WTC11 (cell line): ENCODE measurements at regions of chr17 and their contacts with region 1.

Region 1: GRCh38 chr17:8156246-8156992 is 4.2 kb upstream of the PER1 start:
- DNase-seq: peak; percentile 100
- ATAC-seq: peak; percentile 67
- H3K4me3 Mint-ChIP-seq: no peak overlapping the region
- H3K27ac Mint-ChIP-seq: no peak overlapping the region
- H3K4me1 Mint-ChIP-seq: peaks cover 32% of the 10 kb centered on the region
- H3K27me3 Mint-ChIP-seq: peaks cover 3% of the 10 kb centered on the region; the same call in 1 of the 2 replicates
- CTCF ChIP-seq: no peak

Region 2: GRCh38 chr17:7997186-7997585 is 159.2 kb before region 1 on chr17:
- CTCF ChIA-PET with region 1: no interaction called
- POLR2A ChIA-PET with region 1: no interaction called
- DNase-seq: peak; percentile 69
- ATAC-seq: peak; percentile 92
- H3K4me3 Mint-ChIP-seq: no peak overlapping the region
- H3K27ac Mint-ChIP-seq: peak overlapping the region; percentile 27; the same call in 1 of the 2 replicates
- H3K4me1 Mint-ChIP-seq: peaks cover 9% of the 10 kb centered on the region
- H3K27me3 Mint-ChIP-seq: peaks cover 26% of the 10 kb centered on the region
- CTCF ChIP-seq: 0 out of 2 replicates have a peak, but pooled peaks have one; percentile 19

Region 3: GRCh38 chr17:8138672-8139371 is 17.6 kb before region 1 on chr17:
- CTCF ChIA-PET with region 1: interaction called, 9 read pairs
- POLR2A ChIA-PET with region 1: interaction called, 12 read pairs
- DNase-seq: peak; percentile 97
- ATAC-seq: peak; percentile 91
- H3K4me3 Mint-ChIP-seq: no peak overlapping the region
- H3K27ac Mint-ChIP-seq: no peak overlapping the region
- H3K4me1 Mint-ChIP-seq: peaks cover 8% of the 10 kb centered on the region
- H3K27me3 Mint-ChIP-seq: no peaks in the 10 kb centered on the region; the same call in 1 of the 2 replicates
- CTCF ChIP-seq: peak; percentile 83

Region 4: DNA sequence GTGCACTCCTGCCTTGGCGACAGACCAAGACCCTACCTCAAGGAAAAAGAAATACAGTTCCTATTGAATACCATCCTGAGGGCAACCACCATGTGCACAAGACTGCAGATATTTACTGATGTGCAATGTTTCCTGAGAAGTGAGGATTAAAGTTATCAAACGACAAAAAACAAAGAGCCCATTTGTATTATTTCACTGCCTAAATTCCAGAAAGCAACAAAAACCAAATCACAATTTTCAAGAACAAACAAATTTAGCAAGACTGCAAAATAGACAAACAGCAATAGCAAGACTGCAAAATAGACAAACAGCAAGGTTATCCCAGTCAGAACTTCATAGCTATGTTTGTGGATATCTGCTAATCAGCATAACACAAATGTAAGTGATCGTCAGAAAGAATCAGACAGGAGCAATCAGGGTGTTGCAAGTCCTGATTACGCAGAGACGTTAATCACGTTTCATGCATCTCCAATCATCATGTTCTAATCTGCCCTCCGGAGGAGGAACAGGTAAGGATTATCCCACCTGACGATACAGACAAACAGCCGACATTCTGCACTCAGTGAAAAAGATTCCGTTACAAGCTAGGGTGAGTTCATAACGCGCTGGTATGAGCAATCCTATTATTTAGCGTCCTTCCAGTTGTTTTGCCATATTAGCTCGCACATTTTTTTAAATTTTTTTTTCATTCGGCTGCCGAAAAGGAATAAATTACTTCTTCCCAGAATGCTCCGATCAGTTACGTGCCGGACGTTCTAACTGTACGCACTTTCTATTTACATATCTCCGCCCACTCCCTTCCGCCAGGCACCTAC is 16.8 kb after region 1 on chr17:
- CTCF ChIA-PET with region 1: interaction called, 5 read pairs
- POLR2A ChIA-PET with region 1: interaction called, 22 read pairs
- DNase-seq: peak; percentile 66
- ATAC-seq: peak; percentile 70
- H3K4me3 Mint-ChIP-seq: peak overlapping the region; percentile 85
- H3K27ac Mint-ChIP-seq: peak overlapping the region; percentile 100
- H3K4me1 Mint-ChIP-seq: peaks cover 31% of the 10 kb centered on the region
- H3K27me3 Mint-ChIP-seq: no peaks in the 10 kb centered on the region
- CTCF ChIP-seq: no peak